Lower leg skin (tissue), 4 donors: ENCODE measurements at regions of chr11 and their contacts with region 1.

Region 1: DNA sequence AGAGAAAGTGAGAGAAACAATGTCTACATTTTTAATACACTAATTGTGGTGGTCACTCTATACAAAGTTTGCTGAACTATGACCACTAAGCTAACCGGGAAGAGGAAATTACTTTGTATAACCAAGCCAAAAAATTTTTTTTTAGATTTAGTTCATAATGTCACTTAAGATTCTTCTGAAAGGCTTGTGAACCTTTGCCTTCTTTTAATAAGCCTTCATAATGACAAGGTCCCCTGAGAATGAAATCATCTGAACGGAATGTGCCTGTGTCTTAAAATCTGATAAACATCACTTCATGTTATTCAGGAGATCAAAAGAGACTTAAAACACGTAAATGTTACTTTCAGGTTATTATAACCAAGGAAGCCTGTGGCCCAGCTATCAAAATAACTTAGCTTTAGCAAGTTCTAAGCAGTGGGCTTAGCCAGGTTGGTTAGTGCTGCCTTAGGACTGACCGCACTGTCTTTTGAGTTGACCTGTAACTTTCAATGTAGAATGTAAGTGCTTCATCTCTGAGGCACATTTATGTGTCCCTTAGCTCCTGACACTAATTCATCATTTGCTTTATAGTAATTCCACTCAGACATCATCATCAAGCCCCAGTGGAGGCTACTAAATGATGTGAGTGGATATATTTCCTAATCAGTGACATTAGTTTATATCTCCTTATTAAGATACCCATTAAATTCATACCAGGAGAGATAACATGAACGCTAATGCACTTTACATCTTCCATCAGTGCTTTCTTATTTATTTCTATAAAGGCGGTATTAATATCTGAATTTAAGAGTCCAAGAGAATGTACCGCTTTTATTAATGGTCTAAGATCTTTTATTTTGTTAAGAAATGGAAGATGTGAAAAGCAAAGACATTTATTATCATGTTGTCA is 122.5 kb downstream of the WNT11 start:
- DNase-seq: no peak
- H3K4me3 ChIP-seq: no peak overlapping the region
- CTCF ChIP-seq: no peak
- POLR2A ChIP-seq: no peak

Region 2: DNA sequence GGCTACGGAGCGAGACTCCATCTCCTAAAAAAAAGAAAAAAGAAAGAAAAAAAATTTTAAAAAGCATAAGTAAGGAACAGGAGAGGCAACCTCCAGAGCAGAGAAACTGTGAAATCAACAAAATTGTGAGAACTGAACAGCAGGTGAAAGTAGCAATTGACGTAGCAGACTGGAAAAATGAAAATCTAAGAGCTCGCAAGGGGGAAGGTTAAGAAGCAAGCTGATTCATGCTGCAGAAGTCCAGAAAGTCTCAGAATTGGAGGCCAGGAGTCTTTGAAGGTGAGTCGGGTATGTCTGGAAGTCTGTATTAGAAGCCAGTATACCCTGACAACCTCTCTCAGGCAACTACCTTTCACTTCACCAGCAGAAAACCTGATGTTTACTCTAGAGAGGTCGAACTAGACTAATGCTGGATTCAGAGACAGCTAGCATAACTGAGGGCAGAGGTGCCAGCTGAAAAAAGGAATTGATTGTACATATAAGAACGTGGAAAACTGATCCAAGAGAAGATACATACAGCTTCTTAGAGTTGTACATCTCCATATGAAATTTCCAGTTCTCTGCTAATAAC is 39.0 kb before region 1 on chr11:
- intact Hi-C with region 1: loop called (anchors 1 kb)
- DNase-seq: no peak
- H3K4me3 ChIP-seq: no peak overlapping the region
- CTCF ChIP-seq: no peak
- POLR2A ChIP-seq: no peak

Region 3: GRCh38 chr11:76329084-76329984 is 245.5 kb after region 1 on chr11:
- intact Hi-C with region 1: no loop called
- DNase-seq: peak in 1 of 2 donors; percentile 78
- H3K4me3 ChIP-seq: no peak overlapping the region
- CTCF ChIP-seq: no peak
- POLR2A ChIP-seq: no peak